ENCODE measurements at regions of chr10 and their contacts with region 1.

Region 1: GRCh38 chr10:27360581-27361172 is 120.1 kb upstream of the ACBD5 start:
- DNase-seq: peak; percentile 95
- H3K4me3 Mint-ChIP-seq: no peak overlapping the region
- H3K27ac Mint-ChIP-seq: no peak overlapping the region
- H3K4me1 Mint-ChIP-seq: peaks cover 3% of the 10 kb centered on the region
- H3K27me3 Mint-ChIP-seq: no peaks in the 10 kb centered on the region

Region 2: GRCh38 chr10:26890956-26891355 is 469.7 kb before region 1 on chr10:
- intact Hi-C with region 1: loop called (anchors 1 kb)
- DNase-seq: peak; percentile 86
- H3K4me3 Mint-ChIP-seq: no peak overlapping the region
- H3K27ac Mint-ChIP-seq: no peak overlapping the region
- H3K4me1 Mint-ChIP-seq: peaks cover 2% of the 10 kb centered on the region
- H3K27me3 Mint-ChIP-seq: peaks cover 8% of the 10 kb centered on the region

Region 3: GRCh38 chr10:27223964-27224363 is 136.7 kb before region 1 on chr10:
- intact Hi-C with region 1: loop called (anchors 1 kb)
- DNase-seq: peak; percentile 80
- H3K4me3 Mint-ChIP-seq: no peak overlapping the region
- H3K27ac Mint-ChIP-seq: no peak overlapping the region
- H3K4me1 Mint-ChIP-seq: peaks cover 7% of the 10 kb centered on the region
- H3K27me3 Mint-ChIP-seq: no peaks in the 10 kb centered on the region